T-cell (primary cell): ENCODE measurements at regions of chr4 and their contacts with region 1.

Region 1: GRCh38 chr4:82975792-82976191 is 34.8 kb downstream of the LIN54 start:
- DNase-seq: no peak
- ATAC-seq: no peak
- H3K4me3 ChIP-seq: no peak overlapping the region
- H3K4me3 Mint-ChIP-seq: no peak overlapping the region
- H3K27ac ChIP-seq: no peak overlapping the region
- H3K27ac Mint-ChIP-seq: no peak overlapping the region
- H3K4me1 ChIP-seq: no peaks in the 10 kb centered on the region
- H3K4me1 Mint-ChIP-seq: peaks cover 0 to 3% (median 0%) of the 10 kb centered on the region in 3 donors
- H3K27me3 ChIP-seq: no peaks in the 10 kb centered on the region
- H3K27me3 Mint-ChIP-seq: no peaks in the 10 kb centered on the region

Region 2: DNA sequence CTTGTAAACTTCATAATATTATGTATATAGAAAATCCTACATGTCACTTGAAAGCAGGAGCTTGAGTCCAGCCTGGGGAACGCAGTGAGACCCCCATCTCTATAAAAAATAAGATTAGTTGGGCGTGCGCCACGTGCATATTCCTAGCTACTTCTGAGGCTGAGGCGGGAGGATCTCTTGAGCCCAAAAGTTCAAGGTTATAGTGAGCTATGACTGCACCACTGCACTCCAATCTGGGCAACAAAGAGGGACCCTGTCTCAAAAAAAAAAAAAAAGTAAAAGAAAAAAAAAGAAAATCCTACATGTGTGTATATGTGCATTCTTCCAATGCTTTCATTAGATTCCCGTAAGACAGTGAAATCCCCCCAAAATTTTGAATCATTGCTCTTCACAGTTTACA is 86.5 kb before region 1 on chr4:
- CTCF ChIA-PET with region 1: no interaction called
- POLR2A ChIA-PET with region 1: interaction called in 1 of 2 experiments, 12 read pairs
- DNase-seq: no peak
- ATAC-seq: no peak
- H3K4me3 ChIP-seq: no peak overlapping the region
- H3K4me3 Mint-ChIP-seq: peak overlapping the region; percentile 88 to 94 (median 90)
- H3K27ac ChIP-seq: no peak overlapping the region
- H3K27ac Mint-ChIP-seq: peak overlapping the region; percentile 44 to 96
- H3K4me1 ChIP-seq: peaks cover 14 to 23% of the 10 kb centered on the region in 2 experiments
- H3K4me1 Mint-ChIP-seq: peaks cover 57 to 65% (median 57%) of the 10 kb centered on the region in 3 donors
- H3K27me3 ChIP-seq: no peaks in the 10 kb centered on the region
- H3K27me3 Mint-ChIP-seq: no peaks in the 10 kb centered on the region

Region 3: GRCh38 chr4:83083925-83084475 is 108.2 kb after region 1 on chr4:
- CTCF ChIA-PET with region 1: interaction called in 1 of 2 experiments, 10 read pairs
- POLR2A ChIA-PET with region 1: no interaction called
- DNase-seq: peak in 34 of 35 experiments; percentile 7 to 87 (median 71)
- ATAC-seq: peak; percentile 91 to 99 (median 98)
- H3K4me3 ChIP-seq: peak overlapping the region in 1 of 2 donors; percentile 5
- H3K4me3 Mint-ChIP-seq: peak overlapping the region in 2 of 3 donors; percentile 19 to 61
- H3K27ac ChIP-seq: peak overlapping the region; percentile 86
- H3K27ac Mint-ChIP-seq: peak overlapping the region; percentile 77 to 98
- H3K4me1 ChIP-seq: peaks cover 10 to 31% of the 10 kb centered on the region in 2 experiments
- H3K4me1 Mint-ChIP-seq: peaks cover 22 to 48% (median 47%) of the 10 kb centered on the region in 3 donors
- H3K27me3 ChIP-seq: peaks cover 0 to 3% of the 10 kb centered on the region in 2 experiments
- H3K27me3 Mint-ChIP-seq: no peaks in the 10 kb centered on the region